HEK293 (cell line): ENCODE measurements at regions of chr7 and their contacts with region 1.

Region 1: GRCh38 chr7:95690367-95690947 is 81.9 kb upstream of the DYNC1I1 start:
- H3K4me3 ChIP-seq: no peak overlapping the region
- H3K27ac ChIP-seq: no peak overlapping the region
- H3K4me1 ChIP-seq: no peaks in the 10 kb centered on the region
- CTCF ChIP-seq: peak; percentile 69

Region 2: DNA sequence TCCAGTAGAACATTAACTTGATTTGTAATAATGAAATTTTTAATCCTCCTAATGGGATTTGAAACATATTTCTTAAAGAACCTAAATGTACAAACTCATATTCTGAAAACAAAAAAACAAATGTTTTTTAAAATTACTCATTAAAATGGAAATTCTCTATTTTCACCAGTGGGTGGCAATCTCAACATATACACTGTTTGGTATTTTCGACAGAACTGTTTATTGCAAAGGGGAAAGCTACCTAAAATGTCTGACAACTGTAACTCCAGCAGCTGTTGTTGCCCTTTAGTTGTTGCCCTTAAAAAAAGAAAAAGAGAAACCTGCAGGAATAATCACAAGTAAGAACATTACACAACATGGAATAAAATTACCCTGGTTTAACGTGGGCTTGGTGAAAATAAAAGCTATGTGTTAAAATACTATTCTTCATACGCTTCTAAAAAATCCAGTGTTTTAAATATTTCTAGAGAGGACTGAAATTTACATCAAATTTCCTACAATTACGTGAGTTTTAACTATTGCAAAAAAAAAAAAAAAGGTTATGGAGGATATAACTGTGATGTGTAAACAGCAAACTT is 1241.2 kb before region 1 on chr7:
- CTCF ChIA-PET with region 1: interaction called, 14 read pairs
- POLR2A ChIA-PET with region 1: no interaction called
- H3K4me3 ChIP-seq: no peak overlapping the region
- H3K27ac ChIP-seq: no peak overlapping the region
- H3K4me1 ChIP-seq: peaks cover 6% of the 10 kb centered on the region; the same call in 1 of the 2 replicates
- CTCF ChIP-seq: no peak

Region 3: GRCh38 chr7:95511716-95512260 is 178.7 kb before region 1 on chr7:
- CTCF ChIA-PET with region 1: interaction called, 169 read pairs
- POLR2A ChIA-PET with region 1: interaction called, 7 read pairs
- H3K4me3 ChIP-seq: no peak overlapping the region
- H3K27ac ChIP-seq: no peak overlapping the region
- H3K4me1 ChIP-seq: no peaks in the 10 kb centered on the region
- CTCF ChIP-seq: peak; percentile 62

Region 4: GRCh38 chr7:95527033-95527775 is 163.3 kb before region 1 on chr7:
- CTCF ChIA-PET with region 1: interaction called, 324 read pairs
- POLR2A ChIA-PET with region 1: no interaction called
- H3K4me3 ChIP-seq: no peak overlapping the region
- H3K27ac ChIP-seq: no peak overlapping the region
- H3K4me1 ChIP-seq: no peaks in the 10 kb centered on the region
- CTCF ChIP-seq: peak; percentile 75

Region 5: DNA sequence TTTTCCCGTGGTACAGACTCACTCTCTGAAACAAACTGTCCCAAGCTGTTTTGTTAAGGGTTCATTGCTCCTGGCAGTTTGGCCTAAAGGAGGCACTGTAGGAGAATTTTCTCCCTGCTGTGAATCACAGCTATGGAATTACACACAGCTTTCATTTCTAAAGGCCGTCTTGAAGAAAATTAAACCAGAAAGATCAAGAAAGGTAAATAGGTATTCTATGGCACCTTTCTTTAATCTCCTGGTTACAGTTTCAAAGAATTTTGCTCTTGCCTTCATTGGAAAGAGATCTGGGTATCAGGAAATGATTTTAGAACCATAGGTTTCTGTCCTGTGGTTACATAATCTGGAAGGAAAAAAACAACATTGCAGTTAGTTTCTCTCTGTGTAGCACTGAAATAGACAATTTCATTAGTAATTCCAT is 145.4 kb before region 1 on chr7:
- CTCF ChIA-PET with region 1: interaction called, 109 read pairs
- POLR2A ChIA-PET with region 1: no interaction called
- H3K4me3 ChIP-seq: no peak overlapping the region
- H3K27ac ChIP-seq: no peak overlapping the region
- H3K4me1 ChIP-seq: peaks cover 11% of the 10 kb centered on the region
- CTCF ChIP-seq: no peak

Region 6: DNA sequence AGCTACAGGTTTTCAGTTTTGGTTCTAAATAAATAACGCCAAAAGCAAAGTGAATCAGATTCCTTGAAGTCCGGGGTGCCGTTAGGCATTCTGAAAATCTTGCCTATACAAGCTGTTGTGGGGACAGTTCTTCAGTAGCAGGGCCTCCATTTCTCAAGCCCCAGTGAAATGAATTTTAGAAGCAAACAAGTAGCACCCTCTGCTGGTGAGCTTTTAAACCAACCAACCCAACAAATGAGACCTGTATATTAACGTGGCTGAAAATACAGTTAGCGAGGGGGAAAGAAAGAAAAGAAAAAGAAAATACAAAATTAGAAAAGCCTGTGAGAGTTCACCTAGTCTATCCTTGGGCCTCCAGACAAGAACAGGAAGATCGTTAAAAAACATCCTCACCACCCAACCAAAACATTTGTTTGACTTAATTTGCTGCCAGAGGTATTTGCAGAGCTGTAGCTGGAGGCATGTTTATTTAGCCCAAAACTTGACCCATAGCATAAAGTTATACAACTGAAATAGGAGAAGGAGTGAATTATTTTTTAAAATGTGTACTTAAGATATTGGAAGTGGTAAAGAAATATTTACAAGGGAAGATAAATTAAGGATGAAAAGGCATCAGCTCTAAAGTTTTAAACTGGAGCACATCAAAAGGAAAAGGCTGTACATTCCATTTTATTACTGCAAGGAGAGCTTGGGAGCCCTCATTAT is 180.8 kb after region 1 on chr7:
- CTCF ChIA-PET with region 1: interaction called, 14 read pairs
- POLR2A ChIA-PET with region 1: no interaction called
- H3K4me3 ChIP-seq: no peak overlapping the region
- H3K27ac ChIP-seq: 0 out of 2 replicates have a peak overlapping the region, but pooled peaks have one; percentile 35
- H3K4me1 ChIP-seq: peaks cover 5% of the 10 kb centered on the region; the same call in 1 of the 2 replicates
- CTCF ChIP-seq: peak; percentile 51; the same call in 1 of the 2 replicates